Common myeloid progenitor, CD34-positive (primary cell): ENCODE measurements at regions of chr2 and their contacts with region 1.

Region 1: GRCh38 chr2:16756831-16757644 is 91.4 kb upstream of the CYRIA start:
- DNase-seq: peak; percentile 64 to 80 (median 77)
- H3K4me3 ChIP-seq: no peak overlapping the region
- H3K27ac ChIP-seq: no peak overlapping the region
- H3K4me1 ChIP-seq: no peaks in the 10 kb centered on the region
- H3K27me3 ChIP-seq: no peaks in the 10 kb centered on the region

Region 2: DNA sequence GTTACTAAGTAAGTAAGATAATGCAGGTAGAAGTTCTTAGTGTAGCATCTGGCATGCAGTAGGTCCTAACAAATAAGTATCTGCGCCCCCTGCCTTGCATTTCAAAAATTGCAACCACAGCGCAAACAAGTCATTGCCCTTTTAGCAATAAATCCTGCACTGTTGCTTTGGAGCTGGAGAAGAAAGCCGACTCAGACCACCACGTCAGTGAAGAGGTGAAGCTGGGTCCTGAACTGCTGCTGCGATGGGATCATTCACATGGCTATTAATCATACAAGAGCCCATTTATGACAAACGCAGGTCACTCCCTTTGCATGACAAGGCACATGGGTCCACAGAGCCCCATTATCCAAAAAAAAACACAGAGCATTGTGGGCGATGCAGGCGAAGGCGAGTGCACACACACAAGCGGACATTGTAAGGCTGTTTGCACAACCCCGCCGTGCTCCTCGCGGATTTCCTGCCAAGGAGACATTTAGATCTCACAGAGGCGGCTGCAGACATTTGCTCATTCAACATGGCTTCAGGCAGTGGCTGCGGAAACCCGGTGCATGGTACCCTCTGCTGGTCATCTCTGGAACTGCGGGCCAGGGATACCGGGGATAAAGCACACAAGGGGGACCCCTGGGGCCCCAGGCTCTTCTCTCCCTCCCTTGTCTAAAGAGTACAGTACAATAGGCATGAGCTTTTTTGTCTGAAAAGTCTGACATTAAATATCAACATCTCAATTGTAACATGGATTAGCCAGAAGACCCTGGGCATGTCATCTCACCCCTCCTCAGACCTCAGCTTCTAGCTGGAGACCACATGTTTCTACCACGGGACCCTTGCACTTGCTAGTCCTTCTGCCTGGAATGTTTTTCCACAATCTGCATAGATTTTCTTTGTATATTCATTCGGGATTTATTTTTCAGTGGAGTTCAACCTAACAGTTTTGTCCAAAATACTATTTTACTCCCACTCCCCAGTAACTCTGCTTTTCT is 148.1 kb before region 1 on chr2:
- CTCF ChIA-PET with region 1: interaction called, 144 read pairs
- POLR2A ChIA-PET with region 1: no interaction called
- DNase-seq: peak; percentile 81 to 91 (median 88)
- H3K4me3 ChIP-seq: peak overlapping the region; percentile 40 to 85 (median 71)
- H3K27ac ChIP-seq: no peak overlapping the region
- H3K4me1 ChIP-seq: peaks cover 0 to 4% (median 2%) of the 10 kb centered on the region in 4 experiments
- H3K27me3 ChIP-seq: no peaks in the 10 kb centered on the region

Region 3: GRCh38 chr2:16617282-16618261 is 139.5 kb before region 1 on chr2:
- CTCF ChIA-PET with region 1: interaction called, 144 read pairs
- POLR2A ChIA-PET with region 1: no interaction called
- DNase-seq: no peak
- H3K4me3 ChIP-seq: no peak overlapping the region
- H3K27ac ChIP-seq: no peak overlapping the region
- H3K4me1 ChIP-seq: peaks cover 8 to 25% (median 14%) of the 10 kb centered on the region in 4 experiments
- H3K27me3 ChIP-seq: no peaks in the 10 kb centered on the region

Region 4: GRCh38 chr2:16626497-16626896 is 130.5 kb before region 1 on chr2:
- CTCF ChIA-PET with region 1: interaction called, 29 read pairs
- POLR2A ChIA-PET with region 1: no interaction called
- DNase-seq: peak in 1 of 3 donors; percentile 36
- H3K4me3 ChIP-seq: no peak overlapping the region
- H3K27ac ChIP-seq: no peak overlapping the region
- H3K4me1 ChIP-seq: peaks cover 52 to 100% (median 63%) of the 10 kb centered on the region in 4 experiments
- H3K27me3 ChIP-seq: no peaks in the 10 kb centered on the region

Region 5: DNA sequence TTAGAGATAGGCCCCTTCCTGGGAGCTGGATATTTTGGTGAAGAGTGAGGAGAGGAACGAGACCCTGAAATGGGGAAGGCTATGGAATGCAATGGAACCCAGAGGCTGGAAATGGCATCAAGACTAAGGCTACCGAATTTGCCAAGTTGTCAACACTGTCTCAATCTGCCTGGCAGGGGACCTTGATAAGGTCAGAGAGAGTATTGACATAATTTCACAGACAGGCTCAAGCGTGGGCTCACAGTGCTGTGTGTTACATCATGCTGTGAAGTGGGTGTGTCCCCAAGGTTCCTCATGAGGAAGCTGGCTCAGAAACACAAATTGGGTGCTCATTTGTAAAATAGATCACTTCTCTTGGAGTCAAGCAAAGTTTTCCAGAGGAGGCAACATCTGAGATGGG is 39.6 kb before region 1 on chr2:
- CTCF ChIA-PET with region 1: interaction called, 10 read pairs
- POLR2A ChIA-PET with region 1: no interaction called
- DNase-seq: peak in 1 of 3 donors; percentile 26
- H3K4me3 ChIP-seq: no peak overlapping the region
- H3K27ac ChIP-seq: no peak overlapping the region
- H3K4me1 ChIP-seq: no peaks in the 10 kb centered on the region
- H3K27me3 ChIP-seq: no peaks in the 10 kb centered on the region

Region 6: GRCh38 chr2:16728351-16729136 is 28.5 kb before region 1 on chr2:
- CTCF ChIA-PET with region 1: no interaction called
- POLR2A ChIA-PET with region 1: no interaction called
- DNase-seq: no peak
- H3K4me3 ChIP-seq: no peak overlapping the region
- H3K27ac ChIP-seq: no peak overlapping the region
- H3K4me1 ChIP-seq: no peaks in the 10 kb centered on the region
- H3K27me3 ChIP-seq: peaks cover 0 to 2% (median 0%) of the 10 kb centered on the region in 5 experiments

Region 7: GRCh38 chr2:16773080-16773713 is 16.2 kb after region 1 on chr2:
- CTCF ChIA-PET with region 1: interaction called, 54 read pairs
- POLR2A ChIA-PET with region 1: no interaction called
- DNase-seq: peak; percentile 52 to 76 (median 70)
- H3K4me3 ChIP-seq: no peak overlapping the region
- H3K27ac ChIP-seq: no peak overlapping the region
- H3K4me1 ChIP-seq: no peaks in the 10 kb centered on the region
- H3K27me3 ChIP-seq: peaks cover 0 to 3% (median 0%) of the 10 kb centered on the region in 5 experiments